CD4-positive, alpha-beta memory T cell (primary cell): ENCODE measurements at regions of chr1 and their contacts with region 1.

Region 1: DNA sequence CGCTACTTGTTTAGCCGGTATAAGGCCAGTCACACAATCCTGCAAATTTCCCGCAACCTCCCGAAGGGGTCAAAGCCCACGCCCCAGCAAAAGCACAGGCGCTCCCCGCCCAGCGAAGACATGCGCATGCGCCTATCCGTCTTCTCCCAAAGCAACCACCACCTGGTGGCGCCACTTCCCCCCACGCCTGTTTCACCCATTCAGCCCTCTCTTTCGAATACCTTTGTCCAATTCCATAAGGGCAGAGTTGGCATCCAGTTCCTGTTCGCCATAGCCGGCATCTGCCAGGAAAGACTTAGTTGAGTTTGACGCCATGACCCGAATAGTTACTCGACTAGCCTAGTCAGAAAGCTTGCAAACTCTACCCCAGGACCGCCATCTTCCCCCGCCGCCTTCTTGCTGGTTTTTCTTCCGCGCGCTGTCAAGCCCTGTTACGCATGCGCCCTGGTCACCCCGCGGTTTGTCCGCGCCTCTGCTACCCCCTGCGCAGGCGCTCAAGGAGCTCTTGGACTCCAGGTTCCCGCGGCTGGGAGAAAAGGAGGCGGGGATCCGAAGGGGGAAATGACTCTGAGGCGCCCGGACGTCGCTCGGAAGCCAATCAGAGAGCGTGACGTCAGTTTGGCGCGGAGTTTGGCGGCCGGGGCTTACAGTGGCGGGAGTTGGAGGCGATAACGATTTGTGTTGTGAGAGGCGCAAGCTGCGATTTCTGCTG is at the starts of genes DTL and INTS7:
- DNase-seq: peak; percentile 99
- H3K4me3 ChIP-seq: peak within 1 kb of the TSS; percentile 68 to 78
- H3K4me3 Mint-ChIP-seq: peak within 1 kb of the TSS; percentile 90 to 99 (median 98)
- H3K27ac ChIP-seq: peak within 1 kb of the TSS; percentile 75
- H3K27ac Mint-ChIP-seq: peak within 1 kb of the TSS; percentile 92 to 99 (median 98)
- H3K4me1 ChIP-seq: peaks cover 58% of the 10 kb centered on the region
- H3K4me1 Mint-ChIP-seq: peaks cover 36 to 70% (median 48%) of the 10 kb centered on the region in 4 donors
- H3K27me3 ChIP-seq: no peaks in the 10 kb centered on the region
- H3K27me3 Mint-ChIP-seq: no peaks in the 10 kb centered on the region
- total RNA-seq, gene DTL: 0.06 to 0.15 TPM
- total RNA-seq, gene INTS7: 9.5 to 12.4 TPM

Region 2: GRCh38 chr1:211578640-211579433 is 456.4 kb before region 1 on chr1 and contains the start of gene SLC30A1:
- CTCF ChIA-PET with region 1: no interaction called
- POLR2A ChIA-PET with region 1: interaction called, 3 read pairs
- intact Hi-C with region 1: loop called (anchors 1 kb)
- DNase-seq: peak; percentile 99
- H3K4me3 ChIP-seq: peak within 1 kb of the TSS; percentile 72 to 86
- H3K4me3 Mint-ChIP-seq: peak within 1 kb of the TSS; percentile 90 to 96 (median 92)
- H3K27ac ChIP-seq: peak within 1 kb of the TSS; percentile 76
- H3K27ac Mint-ChIP-seq: peak within 1 kb of the TSS; percentile 86 to 97 (median 93)
- H3K4me1 ChIP-seq: peaks cover 42% of the 10 kb centered on the region
- H3K4me1 Mint-ChIP-seq: peaks cover 23 to 56% (median 36%) of the 10 kb centered on the region in 4 donors
- H3K27me3 ChIP-seq: no peaks in the 10 kb centered on the region
- H3K27me3 Mint-ChIP-seq: peaks cover 0 to 2% of the 10 kb centered on the region in 2 donors
- total RNA-seq, gene SLC30A1: 10.1 to 10.6 TPM

Region 3: DNA sequence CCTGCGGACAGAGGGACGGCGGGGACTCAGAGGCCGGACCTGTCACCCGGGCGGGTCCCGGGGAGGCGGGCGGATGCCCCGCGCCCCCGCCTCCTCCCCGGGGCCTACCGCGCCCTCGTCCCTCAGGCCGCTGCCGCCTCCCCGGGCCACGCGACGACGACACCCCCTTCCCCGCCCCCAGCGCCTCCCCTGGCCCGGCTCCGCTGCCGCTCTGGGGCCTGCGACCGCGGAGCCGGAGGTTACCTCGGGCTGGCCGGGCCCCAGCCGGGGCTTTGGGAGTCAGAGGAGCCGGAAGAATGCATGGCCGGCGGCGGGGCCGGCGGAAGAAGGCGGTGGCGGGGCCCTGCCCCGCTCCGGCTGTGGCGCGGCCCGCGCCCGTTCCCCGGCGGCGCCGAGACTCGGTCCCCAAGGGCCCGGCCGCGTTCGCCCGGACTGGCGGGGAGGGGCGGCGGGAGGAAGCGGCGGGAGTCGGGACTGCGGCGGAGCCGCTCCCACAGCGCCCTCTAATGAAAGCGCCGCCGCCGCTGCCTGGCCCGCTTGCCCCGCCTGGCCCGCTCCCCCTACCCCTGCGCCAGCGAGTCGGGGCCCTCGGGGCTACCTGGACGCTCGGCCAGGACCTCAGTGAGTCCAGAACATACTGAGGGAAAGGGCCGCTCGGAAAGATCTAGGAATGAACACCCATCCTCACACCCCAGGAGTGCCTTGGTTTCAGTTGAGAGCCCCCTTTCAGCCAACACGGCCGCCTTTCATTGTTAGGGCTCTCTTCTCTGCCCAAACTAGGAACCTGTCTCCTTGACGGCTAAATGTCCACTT is 204.7 kb before region 1 on chr1 and contains the start of gene LPGAT1:
- CTCF ChIA-PET with region 1: interaction called, 4 read pairs
- POLR2A ChIA-PET with region 1: no interaction called
- intact Hi-C with region 1: loop called (anchors 1 kb)
- DNase-seq: peak; percentile 62 to 78 (median 64)
- H3K4me3 ChIP-seq: peak within 1 kb of the TSS; percentile 43 to 69
- H3K4me3 Mint-ChIP-seq: peak within 1 kb of the TSS; percentile 90 to 95 (median 92)
- H3K27ac ChIP-seq: peak within 1 kb of the TSS; percentile 72
- H3K27ac Mint-ChIP-seq: peak within 1 kb of the TSS; percentile 86 to 96 (median 92)
- H3K4me1 ChIP-seq: peaks cover 68% of the 10 kb centered on the region
- H3K4me1 Mint-ChIP-seq: peaks cover 52 to 76% (median 59%) of the 10 kb centered on the region in 4 donors
- H3K27me3 ChIP-seq: no peaks in the 10 kb centered on the region
- H3K27me3 Mint-ChIP-seq: no peaks in the 10 kb centered on the region
- total RNA-seq, gene LPGAT1: 29.7 to 31.1 TPM

Region 4: GRCh38 chr1:212045981-212046380 is 10.7 kb after region 1 on chr1:
- CTCF ChIA-PET with region 1: interaction called, 33 read pairs
- POLR2A ChIA-PET with region 1: interaction called, 6 read pairs
- intact Hi-C with region 1: no loop called
- DNase-seq: no peak
- H3K4me3 ChIP-seq: no peak overlapping the region
- H3K4me3 Mint-ChIP-seq: no peak overlapping the region
- H3K27ac ChIP-seq: no peak overlapping the region
- H3K27ac Mint-ChIP-seq: no peak overlapping the region
- H3K4me1 ChIP-seq: peaks cover 2% of the 10 kb centered on the region
- H3K4me1 Mint-ChIP-seq: peaks cover 1 to 3% (median 2%) of the 10 kb centered on the region in 4 donors
- H3K27me3 ChIP-seq: no peaks in the 10 kb centered on the region
- H3K27me3 Mint-ChIP-seq: no peaks in the 10 kb centered on the region

Region 5: DNA sequence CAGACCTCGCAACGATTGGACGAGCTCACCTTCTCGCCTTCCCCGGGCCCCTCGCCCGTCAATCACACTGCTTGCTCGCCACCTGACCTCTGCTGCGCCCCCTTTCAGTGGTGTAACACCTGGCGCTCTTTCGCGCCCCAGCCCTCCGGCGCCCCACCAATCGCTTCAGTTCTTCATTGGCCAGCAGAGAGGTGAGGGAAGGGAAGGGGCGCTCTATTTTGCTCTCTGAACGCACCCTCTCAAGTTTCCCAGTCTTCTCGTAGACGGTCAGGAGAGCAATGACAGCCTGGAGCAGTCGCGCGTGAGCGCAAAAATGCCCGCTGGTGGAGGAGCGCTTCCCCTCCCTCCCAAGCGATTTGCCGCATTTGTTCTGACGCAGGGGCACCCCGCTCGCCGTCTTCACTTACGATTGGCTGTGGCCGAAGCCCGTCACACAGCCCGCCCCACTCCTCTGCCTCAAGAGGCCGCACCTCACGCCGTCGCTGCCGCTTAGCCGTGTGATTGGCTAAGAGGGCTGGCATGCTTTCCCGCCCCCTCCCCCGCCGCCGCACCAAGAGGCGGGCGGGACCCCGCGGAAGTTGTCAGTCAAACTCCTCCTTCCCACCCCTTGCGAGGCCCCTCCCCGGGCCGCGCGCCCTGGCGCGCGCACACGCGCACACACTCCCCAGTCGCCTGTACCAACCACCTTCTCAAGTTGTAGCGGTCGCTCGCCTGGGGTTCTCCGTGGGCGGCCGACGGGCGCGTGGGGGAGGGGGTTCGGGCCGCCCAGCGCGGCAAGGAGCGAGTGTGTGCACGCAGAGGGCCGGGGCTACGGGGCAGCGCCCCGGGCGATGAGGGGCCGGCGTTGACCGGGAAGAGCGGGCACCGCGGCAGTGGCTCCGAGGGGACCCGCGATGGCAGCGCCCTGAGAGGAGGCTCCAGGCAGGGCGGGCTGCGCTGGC is 249.7 kb after region 1 on chr1 and contains the start of gene PPP2R5A:
- CTCF ChIA-PET with region 1: interaction called, 32 read pairs
- POLR2A ChIA-PET with region 1: interaction called, 40 read pairs
- intact Hi-C with region 1: loop called (anchors 1 kb)
- DNase-seq: peak; percentile 98 to 99 (median 99)
- H3K4me3 ChIP-seq: peak within 1 kb of the TSS; percentile 85 to 99
- H3K4me3 Mint-ChIP-seq: peak within 1 kb of the TSS; percentile 99 to 100 (median 100)
- H3K27ac ChIP-seq: peak within 1 kb of the TSS; percentile 92
- H3K27ac Mint-ChIP-seq: peak within 1 kb of the TSS; percentile 94 to 99 (median 99)
- H3K4me1 ChIP-seq: peaks cover 34% of the 10 kb centered on the region
- H3K4me1 Mint-ChIP-seq: peaks cover 26 to 49% (median 37%) of the 10 kb centered on the region in 4 donors
- H3K27me3 ChIP-seq: no peaks in the 10 kb centered on the region
- H3K27me3 Mint-ChIP-seq: no peaks in the 10 kb centered on the region
- total RNA-seq, gene PPP2R5A: 53.8 to 55.0 TPM

Region 6: DNA sequence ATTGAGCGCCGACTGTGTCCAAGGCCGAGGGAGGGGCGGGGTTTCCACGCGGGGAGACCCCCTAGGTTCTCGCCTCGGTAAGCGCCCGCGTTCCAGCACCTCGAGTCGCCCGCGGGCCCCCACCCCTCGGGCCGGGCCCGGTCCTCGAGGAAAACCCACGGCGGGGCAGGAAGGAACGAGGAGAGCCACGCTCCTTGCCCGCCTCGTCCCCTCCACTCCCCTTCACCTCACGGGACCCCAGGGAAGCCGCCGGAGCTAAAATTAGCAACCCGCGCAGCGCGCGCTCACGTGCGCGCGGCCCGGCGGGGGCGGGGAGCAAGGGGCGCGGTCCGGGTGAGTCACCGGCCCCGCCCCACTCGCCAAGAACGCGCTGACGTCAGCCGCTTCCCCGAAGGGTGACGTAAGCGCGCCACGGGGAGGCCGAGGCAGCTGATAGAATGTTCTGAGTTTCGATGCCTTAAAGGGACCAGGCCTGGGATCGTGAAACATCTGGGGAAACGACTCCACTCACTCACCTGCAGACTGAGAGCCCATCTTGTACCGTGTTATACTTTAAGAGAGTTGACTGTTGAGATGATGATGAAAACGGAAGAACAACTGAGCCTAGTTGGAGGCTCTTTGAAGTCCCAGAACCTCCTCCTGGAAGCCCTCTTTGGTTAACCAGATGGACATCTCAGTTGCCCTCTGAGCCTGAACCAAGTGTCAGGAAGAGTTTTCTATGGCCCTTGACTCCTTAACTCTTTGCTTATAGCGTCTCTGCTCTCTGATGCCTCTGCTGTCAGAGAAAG is 523.6 kb after region 1 on chr1:
- CTCF ChIA-PET with region 1: interaction called, 3 read pairs
- POLR2A ChIA-PET with region 1: interaction called, 4 read pairs
- intact Hi-C with region 1: loop called (anchors 5 kb)
- DNase-seq: peak; percentile 90 to 92 (median 91)
- H3K4me3 ChIP-seq: peak overlapping the region in 1 of 2 donors; percentile 64
- H3K4me3 Mint-ChIP-seq: peak overlapping the region; percentile 83 to 93 (median 86)
- H3K27ac ChIP-seq: peak overlapping the region; percentile 79
- H3K27ac Mint-ChIP-seq: peak overlapping the region; percentile 81 to 100 (median 99)
- H3K4me1 ChIP-seq: peaks cover 11% of the 10 kb centered on the region
- H3K4me1 Mint-ChIP-seq: peaks cover 2 to 16% (median 8%) of the 10 kb centered on the region in 4 donors
- H3K27me3 ChIP-seq: no peaks in the 10 kb centered on the region
- H3K27me3 Mint-ChIP-seq: peaks cover 4% of the 10 kb centered on the region in 2 donors